OCI-LY7 (cell line): ENCODE measurements at regions of chr1 and their contacts with region 1.

Region 1: DNA sequence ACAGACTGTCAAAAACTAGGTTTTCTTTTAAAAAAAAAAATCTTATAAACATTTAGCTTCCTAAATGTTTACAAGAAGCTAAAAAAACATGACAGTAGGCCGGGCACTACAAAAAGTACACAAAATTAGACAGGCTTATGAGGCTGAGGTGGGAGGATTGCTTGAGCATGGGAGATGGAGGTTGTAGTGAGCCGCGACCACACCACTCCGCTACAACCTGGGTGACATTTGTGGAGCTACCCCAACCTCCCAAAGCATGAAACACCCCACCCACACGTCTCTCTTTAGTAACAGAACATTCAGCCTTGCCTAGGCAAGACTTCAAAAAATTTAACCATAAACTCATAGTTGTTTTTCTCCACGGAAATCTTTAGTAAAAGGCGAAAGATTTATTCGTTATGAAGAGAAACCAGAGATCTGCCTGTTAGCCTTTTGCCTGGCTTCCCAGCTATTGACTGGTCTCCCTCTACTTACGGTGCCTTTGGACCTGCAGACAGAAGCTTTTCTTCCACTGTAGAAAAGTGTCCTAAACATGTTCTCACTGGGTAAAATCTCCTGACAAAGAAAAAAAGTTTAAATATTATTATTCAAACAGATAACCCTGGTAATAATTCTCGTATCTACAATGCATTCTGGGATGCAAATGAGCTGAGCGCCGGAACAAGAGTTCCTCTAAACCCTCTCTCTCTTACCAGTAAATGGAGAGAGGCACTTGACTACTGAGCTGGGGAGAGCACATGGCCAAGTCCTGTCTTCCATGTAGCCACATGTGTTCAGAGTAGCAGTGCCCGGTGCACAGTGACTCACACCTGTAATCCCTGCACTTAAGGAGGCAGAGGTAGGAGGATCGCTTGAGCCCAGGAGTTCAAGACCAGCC is 9.2 kb downstream of the RNU5D-1 start:
- DNase-seq: peak; percentile 97
- H3K4me3 ChIP-seq: no peak overlapping the region
- H3K27ac ChIP-seq: peak overlapping the region; percentile 89
- H3K4me1 ChIP-seq: peaks cover 64% of the 10 kb centered on the region
- CTCF ChIP-seq: no peak

Region 2: DNA sequence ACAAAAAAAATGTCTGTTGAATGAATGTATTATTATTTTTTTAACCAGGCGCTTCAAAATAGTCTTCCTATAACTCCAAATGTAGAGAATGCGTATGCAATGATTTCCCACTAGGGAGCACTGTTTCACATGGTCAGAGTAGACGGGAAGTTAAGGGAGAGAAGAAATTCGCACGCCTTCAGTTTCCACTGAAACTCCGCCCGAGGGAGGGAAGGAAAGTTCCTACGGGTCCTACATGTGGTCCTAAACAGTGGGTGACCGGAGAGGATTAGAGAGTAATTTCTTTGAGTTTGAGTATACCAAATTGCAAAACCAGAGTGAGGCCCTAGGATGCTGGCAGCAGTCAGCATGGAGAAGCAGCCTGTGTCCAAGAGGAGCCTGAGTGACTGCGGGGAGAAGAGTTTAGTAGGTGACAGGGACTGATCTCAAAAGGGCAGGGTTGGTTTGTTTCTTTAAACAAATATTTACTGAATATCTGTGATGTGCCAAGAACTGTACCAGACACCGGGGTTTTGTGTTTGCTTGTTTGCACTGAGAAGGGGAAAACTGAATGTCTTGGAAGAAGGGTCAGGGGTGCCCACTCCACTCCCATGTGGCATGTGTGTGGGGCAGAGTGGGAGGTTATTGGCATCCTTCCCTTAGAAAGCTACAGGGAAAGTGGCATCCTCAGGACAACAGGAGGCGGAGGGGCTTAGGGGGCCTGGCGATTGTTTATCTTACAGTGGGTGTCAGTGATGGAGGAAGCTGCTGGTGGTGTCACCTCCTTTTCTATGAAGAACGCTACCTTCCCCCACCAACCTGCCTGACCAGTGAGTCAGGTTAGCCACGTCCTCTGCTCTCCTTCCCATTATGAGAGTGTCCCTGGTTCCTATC is 13.5 kb before region 1 on chr1:
- CTCF ChIA-PET with region 1: interaction called, 10 read pairs
- POLR2A ChIA-PET with region 1: interaction called, 137 read pairs
- intact Hi-C with region 1: loop called (anchors 1 kb)
- DNase-seq: peak; percentile 79
- H3K4me3 ChIP-seq: peak overlapping the region; percentile 12
- H3K27ac ChIP-seq: peak overlapping the region; percentile 14
- H3K4me1 ChIP-seq: peaks cover 44% of the 10 kb centered on the region
- CTCF ChIP-seq: peak; percentile 97

Region 3: DNA sequence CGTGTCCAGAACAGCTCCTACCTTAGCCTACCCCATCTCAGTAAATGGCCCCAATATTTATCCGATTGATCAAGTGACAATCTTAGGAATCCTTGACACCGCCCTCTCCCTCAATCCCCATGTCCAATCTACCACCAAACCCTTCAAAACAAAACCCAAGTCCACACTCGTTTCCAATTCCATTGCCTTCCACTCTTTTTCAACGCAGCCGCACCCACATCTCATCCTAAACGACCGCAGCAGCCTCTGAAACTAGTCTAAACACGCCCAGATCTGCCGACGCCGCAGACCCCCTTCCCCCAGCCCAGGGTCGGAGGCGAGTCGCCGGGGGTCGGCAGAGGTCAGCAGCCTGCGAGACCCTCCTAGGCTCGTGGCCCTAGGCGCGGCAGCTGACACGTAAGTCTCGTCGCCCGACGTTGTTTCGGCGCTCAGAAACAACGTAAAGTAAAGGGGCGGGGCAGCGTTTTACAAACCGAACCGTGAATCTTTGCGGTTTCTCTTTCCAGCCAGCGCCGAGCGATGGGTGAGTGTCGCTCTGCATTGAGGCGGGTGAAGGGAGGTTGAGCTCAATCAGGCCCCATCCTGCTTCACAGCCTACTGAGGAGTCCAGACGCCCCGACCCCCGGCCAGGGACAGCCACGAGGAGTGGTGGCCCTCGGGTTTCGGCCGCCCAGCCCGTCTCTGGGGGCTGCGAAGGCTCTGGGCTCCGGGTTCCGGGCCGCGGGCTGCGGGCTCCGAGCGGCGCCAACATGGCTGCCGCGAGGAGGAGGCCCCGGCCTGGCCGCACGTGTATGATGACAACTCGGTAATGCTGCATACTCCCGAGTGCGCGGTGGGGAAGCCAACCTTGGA is 53.6 kb after region 1 on chr1 and contains the start of gene RPS8:
- CTCF ChIA-PET with region 1: no interaction called
- POLR2A ChIA-PET with region 1: interaction called, 22 read pairs
- intact Hi-C with region 1: no loop called
- DNase-seq: peak; percentile 95
- H3K4me3 ChIP-seq: peak within 1 kb of the TSS; percentile 99
- H3K27ac ChIP-seq: peak within 1 kb of the TSS; percentile 68
- H3K4me1 ChIP-seq: peaks cover 32% of the 10 kb centered on the region
- CTCF ChIP-seq: no peak
- total RNA-seq, gene RPS8: 4,149 and 4,355 TPM in 2 replicates

Region 4: GRCh38 chr1:44819608-44820327 is 98.0 kb after region 1 on chr1:
- CTCF ChIA-PET with region 1: no interaction called
- POLR2A ChIA-PET with region 1: interaction called, 83 read pairs
- intact Hi-C with region 1: loop called (anchors 1 kb)
- DNase-seq: peak; percentile 95
- H3K4me3 ChIP-seq: peak overlapping the region; percentile 67
- H3K27ac ChIP-seq: peak overlapping the region; percentile 93
- H3K4me1 ChIP-seq: peaks cover 36% of the 10 kb centered on the region
- CTCF ChIP-seq: no peak